ENCODE measurements at regions of chr5 and their contacts with region 1.

Region 1: GRCh38 chr5:174535667-174536066 is 188.7 kb upstream of the MSX2 start:
- DNase-seq: no peak
- ATAC-seq: no peak
- H3K4me3 ChIP-seq: no peak overlapping the region
- H3K27ac ChIP-seq: no peak overlapping the region
- H3K4me1 ChIP-seq: peaks cover 4% of the 10 kb centered on the region; the same call in 1 of the 2 replicates
- H3K27me3 ChIP-seq: no peaks in the 10 kb centered on the region; a peak in 1 of 5 replicates
- CTCF ChIP-seq: no peak
- EP300 ChIP-seq: no peak
- POLR2A ChIP-seq: no peak
- RAD21 ChIP-seq: no peak

Region 2: GRCh38 chr5:174464504-174465165 is 71.0 kb before region 1 on chr5:
- CTCF ChIA-PET with region 1: no interaction called
- POLR2A ChIA-PET with region 1: no interaction called
- in situ Hi-C with region 1: no loop called
- intact Hi-C with region 1: loop called (anchors 2 kb)
- DNase-seq: no peak
- ATAC-seq: no peak
- H3K4me3 ChIP-seq: no peak overlapping the region
- H3K27ac ChIP-seq: no peak overlapping the region
- H3K4me1 ChIP-seq: no peaks in the 10 kb centered on the region
- H3K27me3 ChIP-seq: no peaks in the 10 kb centered on the region
- CTCF ChIP-seq: no peak
- EP300 ChIP-seq: no peak
- POLR2A ChIP-seq: no peak
- RAD21 ChIP-seq: no peak